ENCODE measurements at regions of chr18 and their contacts with region 1.

Region 1: DNA sequence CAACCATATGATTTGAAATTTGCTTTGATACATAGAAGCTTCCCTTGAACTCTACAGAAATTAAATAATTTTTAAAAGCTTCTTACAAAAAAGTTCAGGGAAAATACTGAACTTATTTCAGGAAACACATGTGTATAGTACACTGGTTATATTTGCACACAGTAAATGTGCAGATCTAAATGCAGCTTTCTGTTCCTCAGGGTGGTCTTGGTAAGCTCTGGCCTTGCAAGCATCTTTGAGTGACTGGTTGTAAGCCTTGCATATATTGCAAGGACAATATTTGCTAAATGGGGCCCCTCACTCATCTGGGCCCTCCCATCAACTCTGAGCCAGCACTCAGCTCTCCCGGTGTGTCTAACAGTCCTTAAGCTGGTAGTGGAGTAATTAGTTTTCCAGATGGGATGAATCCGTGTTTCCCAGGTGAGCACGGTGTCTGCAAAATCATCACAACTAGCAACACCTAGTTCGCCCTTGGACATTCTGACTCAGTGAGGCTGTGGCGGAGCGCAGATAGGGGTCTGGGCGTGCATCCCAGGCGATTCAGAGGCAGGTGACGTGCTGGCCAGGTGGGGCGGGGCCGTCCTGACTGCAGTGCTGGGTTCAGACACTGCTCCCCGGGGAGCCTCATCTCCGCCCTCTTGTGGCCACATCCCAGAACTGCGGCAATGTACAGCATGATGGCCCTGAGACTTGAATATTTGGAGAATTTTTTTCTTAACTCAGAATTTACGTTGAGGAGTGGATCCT is 149.6 kb downstream of the MBP start:
- DNase-seq: peak; percentile 96
- H3K4me3 Mint-ChIP-seq: no peak overlapping the region
- H3K27ac Mint-ChIP-seq: no peak overlapping the region
- H3K4me1 Mint-ChIP-seq: peaks cover 4% of the 10 kb centered on the region
- H3K27me3 Mint-ChIP-seq: no peaks in the 10 kb centered on the region

Region 2: DNA sequence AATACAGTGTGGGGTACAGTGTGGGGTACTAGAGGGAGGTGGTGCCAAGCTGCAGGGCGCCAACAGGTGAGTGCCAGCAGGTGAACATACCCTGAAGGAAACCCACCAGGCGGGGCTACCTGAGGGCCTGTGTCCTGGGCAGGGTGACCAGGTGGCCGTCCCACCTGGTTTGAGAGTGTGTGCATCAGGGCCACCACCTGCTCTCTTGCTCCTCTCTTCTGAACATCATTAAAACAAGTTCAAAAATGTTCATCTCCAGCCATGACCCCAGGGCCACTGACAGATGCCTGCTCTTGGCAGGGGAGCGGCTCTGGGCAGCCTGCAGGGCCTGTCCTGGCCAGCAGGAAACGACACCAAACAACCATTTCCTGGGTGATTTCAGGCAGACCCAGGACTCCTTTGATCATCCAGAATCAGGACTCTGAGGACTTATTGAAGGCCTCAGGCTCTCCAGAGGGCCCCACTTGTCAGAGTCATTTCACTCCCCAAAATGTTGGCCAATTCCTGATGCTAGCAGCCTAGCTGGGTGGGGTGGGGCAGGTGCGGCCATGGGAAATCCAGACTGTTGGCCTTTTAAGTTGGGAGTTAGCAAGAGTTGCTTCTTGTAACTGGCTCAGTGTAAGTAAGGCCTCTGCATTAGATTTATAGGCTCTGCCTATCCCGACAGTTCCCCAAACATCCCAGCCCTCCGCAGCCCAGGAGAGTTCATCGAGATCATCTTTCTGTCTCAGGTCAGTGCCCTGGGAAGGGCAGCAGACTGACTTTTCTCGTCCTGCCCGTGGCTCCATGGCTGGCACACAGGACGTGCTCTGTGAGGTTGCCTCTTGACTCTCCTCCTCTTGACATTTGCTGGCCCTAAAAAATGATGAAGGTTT is 272.1 kb before region 1 on chr18:
- intact Hi-C with region 1: no loop called
- DNase-seq: no peak
- H3K4me3 Mint-ChIP-seq: no peak overlapping the region
- H3K27ac Mint-ChIP-seq: no peak overlapping the region
- H3K4me1 Mint-ChIP-seq: peaks cover 8% of the 10 kb centered on the region
- H3K27me3 Mint-ChIP-seq: peaks cover 16% of the 10 kb centered on the region

Region 3: GRCh38 chr18:76875390-76876325 is 107.4 kb before region 1 on chr18:
- intact Hi-C with region 1: loop called (anchors 1 kb)
- DNase-seq: peak; percentile 84
- H3K4me3 Mint-ChIP-seq: no peak overlapping the region
- H3K27ac Mint-ChIP-seq: peak overlapping the region; percentile 22
- H3K4me1 Mint-ChIP-seq: peaks cover 13% of the 10 kb centered on the region
- H3K27me3 Mint-ChIP-seq: no peaks in the 10 kb centered on the region

Region 4: DNA sequence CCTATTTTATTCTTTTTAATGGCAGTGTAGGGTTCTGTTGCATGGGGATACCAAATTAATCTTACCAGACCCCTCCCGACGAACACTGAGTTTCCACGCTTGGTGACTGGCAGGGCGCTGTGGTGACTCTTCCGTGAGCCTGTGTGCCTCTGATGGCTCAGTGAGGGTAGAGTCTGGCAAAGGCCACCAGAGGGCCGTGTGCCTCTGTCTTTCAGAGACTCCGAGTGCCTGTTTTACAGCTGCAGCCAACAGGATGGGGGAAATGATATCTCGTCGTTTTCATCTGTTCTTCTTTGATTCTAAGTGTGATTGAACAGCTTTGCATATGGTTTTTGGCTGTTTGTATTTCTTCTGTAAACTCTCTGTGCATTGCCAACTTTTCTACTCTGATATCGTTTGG is 60.9 kb before region 1 on chr18:
- intact Hi-C with region 1: loop called (anchors 1 kb)
- DNase-seq: peak; percentile 88
- H3K4me3 Mint-ChIP-seq: no peak overlapping the region
- H3K27ac Mint-ChIP-seq: peak overlapping the region; percentile 18
- H3K4me1 Mint-ChIP-seq: peaks cover 14% of the 10 kb centered on the region
- H3K27me3 Mint-ChIP-seq: no peaks in the 10 kb centered on the region

Measured in activated CD4-positive, alpha-beta T cell treated with anti-CD3 and anti-CD28 coated beads, Interleukin-2, amount 10 ng/mL, durations not matched to agents 24 days and 14 days (primary cell).